ENCODE measurements at regions of chr16 and their contacts with region 1.

Region 1: DNA sequence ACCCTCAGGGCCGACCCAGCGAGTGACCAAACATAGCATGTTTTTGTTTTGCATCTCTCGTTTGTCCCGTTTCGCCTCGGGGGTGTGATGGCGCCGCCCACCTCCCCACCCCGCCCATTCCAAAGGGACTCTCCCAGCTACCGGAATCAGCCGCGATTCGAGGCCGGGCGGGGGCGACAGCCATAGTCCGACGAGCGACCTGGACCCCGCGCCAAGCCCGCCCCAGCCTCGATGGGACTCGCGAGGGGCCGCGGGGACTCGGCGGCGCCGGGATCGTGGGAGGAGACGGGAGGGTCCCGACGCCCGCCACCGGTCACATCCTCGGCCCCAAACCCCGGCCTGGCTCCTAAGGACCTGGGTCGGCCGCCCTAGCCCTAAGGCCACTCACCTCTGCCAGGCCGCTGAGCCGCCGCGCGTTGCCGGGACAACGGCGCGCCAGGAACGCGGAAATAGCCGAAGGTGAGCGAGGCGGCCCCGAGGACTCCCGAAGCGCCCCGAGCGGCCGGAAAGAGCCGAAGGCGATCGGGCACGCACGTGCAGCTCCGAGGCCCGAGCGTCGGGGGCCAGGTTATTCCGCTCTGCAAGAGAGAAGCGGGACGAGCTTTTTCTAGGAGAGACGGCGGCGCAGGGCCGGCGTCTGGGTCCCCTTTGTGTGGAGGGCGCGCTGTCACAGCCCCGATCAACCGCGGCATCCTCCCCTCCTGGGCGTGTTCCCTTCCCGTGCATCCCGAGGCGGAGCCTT is 1.4 kb downstream of the IFT140 start:
- DNase-seq: peak; percentile 90
- H3K4me3 Mint-ChIP-seq: peak overlapping the region; percentile 96
- H3K27ac Mint-ChIP-seq: no peak overlapping the region
- H3K4me1 Mint-ChIP-seq: peaks cover 28% of the 10 kb centered on the region
- H3K27me3 Mint-ChIP-seq: no peaks in the 10 kb centered on the region

Region 2: DNA sequence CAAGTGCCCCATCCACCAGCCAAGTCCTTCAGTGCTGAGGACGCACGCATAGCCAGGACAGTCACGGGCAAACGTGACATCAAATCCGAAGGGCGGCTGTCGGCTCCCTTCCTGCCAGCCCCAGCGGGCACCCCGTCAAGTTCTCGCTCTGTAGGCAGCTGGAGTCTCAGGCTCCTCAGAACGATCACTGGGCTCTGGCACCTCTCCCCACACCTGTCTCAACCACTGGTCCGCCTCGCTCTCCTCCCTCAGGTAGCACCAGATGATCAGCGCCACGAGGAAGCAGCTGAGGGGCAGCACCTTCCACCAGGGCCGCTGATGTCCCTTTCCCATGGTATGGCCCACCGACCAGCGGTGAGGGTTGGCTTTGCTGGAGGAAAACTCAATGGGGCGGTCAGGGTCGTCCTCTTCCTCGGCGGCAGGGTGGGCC is 190.3 kb before region 1 on chr16:
- CTCF ChIA-PET with region 1: no interaction called
- intact Hi-C with region 1: loop called (anchors 1 kb)
- DNase-seq: no peak
- H3K4me3 Mint-ChIP-seq: peak overlapping the region; percentile 80
- H3K27ac Mint-ChIP-seq: peak overlapping the region; percentile 70
- H3K4me1 Mint-ChIP-seq: peaks cover 33% of the 10 kb centered on the region
- H3K27me3 Mint-ChIP-seq: no peaks in the 10 kb centered on the region

Region 3: DNA sequence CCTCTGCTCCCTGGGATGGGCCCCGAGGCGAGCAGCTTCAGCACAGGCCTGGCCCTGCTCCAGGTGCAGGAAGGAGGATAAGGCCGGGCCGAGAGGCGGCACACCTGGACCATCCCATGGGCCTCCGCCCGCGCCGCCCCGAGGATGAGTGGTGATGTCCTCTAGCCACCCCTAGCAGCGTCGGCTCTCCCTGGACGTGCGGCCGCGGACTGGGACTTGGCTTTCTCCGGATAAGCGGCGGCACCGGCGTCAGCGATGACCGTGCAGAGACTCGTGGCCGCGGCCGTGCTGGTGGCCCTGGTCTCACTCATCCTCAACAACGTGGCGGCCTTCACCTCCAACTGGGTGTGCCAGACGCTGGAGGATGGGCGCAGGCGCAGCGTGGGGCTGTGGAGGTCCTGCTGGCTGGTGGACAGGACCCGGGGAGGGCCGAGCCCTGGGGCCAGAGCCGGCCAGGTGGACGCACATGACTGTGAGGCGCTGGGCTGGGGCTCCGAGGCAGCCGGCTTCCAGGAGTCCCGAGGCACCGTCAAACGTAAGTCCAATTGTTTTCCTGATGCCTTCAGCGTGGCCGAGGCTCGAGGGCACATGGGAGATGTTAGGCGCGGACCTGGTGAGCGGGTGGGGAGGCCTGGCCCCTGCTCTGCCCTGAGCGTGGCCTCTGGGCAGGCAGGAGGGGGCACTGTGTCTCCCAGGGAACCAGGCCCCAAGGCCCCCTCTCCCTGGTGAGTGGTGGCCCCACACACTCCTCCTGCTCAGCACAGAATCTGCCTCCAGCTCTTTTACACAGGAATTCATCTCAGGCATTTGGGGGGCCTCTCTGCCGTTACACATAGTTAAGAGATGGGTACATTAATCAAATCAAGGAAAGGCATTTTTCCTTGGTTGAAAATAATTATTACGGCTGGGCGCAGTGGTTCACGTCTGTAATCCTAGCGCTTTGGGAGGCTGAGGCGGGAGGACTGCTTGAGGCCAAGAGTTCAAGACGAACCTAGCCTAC is 76.1 kb before region 1 on chr16:
- CTCF ChIA-PET with region 1: interaction called, 3 read pairs
- intact Hi-C with region 1: loop called (anchors 2 kb)
- DNase-seq: peak; percentile 48
- H3K4me3 Mint-ChIP-seq: peak overlapping the region; percentile 97
- H3K27ac Mint-ChIP-seq: peak overlapping the region; percentile 95
- H3K4me1 Mint-ChIP-seq: peaks cover 49% of the 10 kb centered on the region
- H3K27me3 Mint-ChIP-seq: no peaks in the 10 kb centered on the region

Region 4: GRCh38 chr16:1677802-1678496 is 67.5 kb after region 1 on chr16 and contains the start of gene JPT2:
- CTCF ChIA-PET with region 1: no interaction called
- intact Hi-C with region 1: loop called (anchors 2 kb)
- DNase-seq: peak; percentile 98
- H3K4me3 Mint-ChIP-seq: peak within 1 kb of the TSS; percentile 95
- H3K27ac Mint-ChIP-seq: peak within 1 kb of the TSS; percentile 79
- H3K4me1 Mint-ChIP-seq: peaks cover 35% of the 10 kb centered on the region
- H3K27me3 Mint-ChIP-seq: no peaks in the 10 kb centered on the region
- total RNA-seq, gene JPT2: 54.0 to 69.4 TPM

Region 5: GRCh38 chr16:1772736-1773584 is 162.5 kb after region 1 on chr16 and contains the starts of genes EME2 and MRPS34:
- CTCF ChIA-PET with region 1: no interaction called
- intact Hi-C with region 1: loop called (anchors 2 kb)
- DNase-seq: peak; percentile 85
- H3K4me3 Mint-ChIP-seq: peak within 1 kb of the TSS; percentile 93
- H3K27ac Mint-ChIP-seq: peak within 1 kb of the TSS; percentile 93
- H3K4me1 Mint-ChIP-seq: peaks cover 7% of the 10 kb centered on the region
- H3K27me3 Mint-ChIP-seq: no peaks in the 10 kb centered on the region
- total RNA-seq, gene EME2: 7.7 to 7.8 TPM
- total RNA-seq, gene MRPS34: 122 to 138 TPM

Measured in activated naive CD4-positive, alpha-beta T cell treated with anti-CD3 and anti-CD28 coated beads for 36 hours (primary cell).